Panc1 (cell line): ENCODE measurements at regions of chr9 and their contacts with region 1.

Region 1: GRCh38 chr9:76704593-76705204 is 59.5 kb upstream of the PCA3 start:
- DNase-seq: peak; percentile 47
- ATAC-seq: no peak; the same call in 1 of the 2 replicates
- H3K4me3 ChIP-seq: no peak overlapping the region
- H3K27ac ChIP-seq: no peak overlapping the region
- H3K4me1 ChIP-seq: no peaks in the 10 kb centered on the region
- H3K27me3 ChIP-seq: peaks cover 3% of the 10 kb centered on the region
- CTCF ChIP-seq: peak; percentile 54

Region 2: GRCh38 chr9:76445976-76446375 is 258.7 kb before region 1 on chr9:
- CTCF ChIA-PET with region 1: no interaction called
- POLR2A ChIA-PET with region 1: no interaction called
- in situ Hi-C with region 1: no loop called
- intact Hi-C with region 1: loop called (anchors 2 kb)
- DNase-seq: no peak
- ATAC-seq: no peak
- H3K4me3 ChIP-seq: no peak overlapping the region
- H3K27ac ChIP-seq: no peak overlapping the region
- H3K4me1 ChIP-seq: no peaks in the 10 kb centered on the region
- H3K27me3 ChIP-seq: no peaks in the 10 kb centered on the region
- CTCF ChIP-seq: no peak

Region 3: GRCh38 chr9:76667521-76667957 is 37.2 kb before region 1 on chr9:
- CTCF ChIA-PET with region 1: no interaction called
- POLR2A ChIA-PET with region 1: no interaction called
- in situ Hi-C with region 1: no loop called
- intact Hi-C with region 1: loop called (anchors 2 kb)
- DNase-seq: no peak
- ATAC-seq: no peak
- H3K4me3 ChIP-seq: no peak overlapping the region
- H3K27ac ChIP-seq: no peak overlapping the region
- H3K4me1 ChIP-seq: no peaks in the 10 kb centered on the region
- H3K27me3 ChIP-seq: no peaks in the 10 kb centered on the region; the same call in 1 of the 2 replicates
- CTCF ChIP-seq: no peak

Region 4: DNA sequence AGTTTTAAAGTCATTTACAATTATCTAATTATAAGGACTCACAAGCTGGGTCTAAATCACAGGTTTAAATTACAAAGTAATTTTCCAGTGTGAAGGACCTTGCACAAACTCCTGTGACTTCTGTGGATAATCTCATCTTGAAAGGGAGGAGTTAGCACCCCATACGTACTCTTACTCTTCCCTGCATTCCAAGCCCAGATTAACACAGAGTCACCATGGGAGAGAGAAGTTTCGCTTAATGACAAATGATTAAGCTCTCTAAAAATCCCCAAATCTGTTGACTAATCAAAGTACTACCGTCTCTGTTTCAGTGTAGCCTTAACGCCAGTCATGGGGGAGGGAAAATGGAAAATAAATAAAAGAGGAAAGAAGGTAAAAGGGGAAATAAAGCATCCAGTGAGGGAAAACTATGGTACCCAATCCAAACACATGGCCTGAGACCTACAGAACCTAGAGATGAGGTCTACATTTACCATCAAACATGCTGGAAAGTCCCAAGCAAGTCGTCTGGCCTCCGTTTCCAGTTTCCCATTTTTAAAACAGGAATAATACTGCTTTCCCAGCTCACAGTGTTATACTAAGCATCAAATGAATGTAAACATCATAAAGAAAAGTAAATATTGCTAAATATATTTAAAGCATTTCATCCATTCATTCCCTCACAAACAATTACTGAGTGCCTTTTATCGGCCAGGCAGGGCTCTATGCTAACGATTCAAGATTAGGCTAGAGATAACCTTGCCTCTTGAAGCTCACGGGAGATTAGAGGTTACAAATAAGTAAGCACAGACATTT is 122.8 kb after region 1 on chr9:
- CTCF ChIA-PET with region 1: no interaction called
- POLR2A ChIA-PET with region 1: no interaction called
- in situ Hi-C with region 1: no loop called
- intact Hi-C with region 1: no loop called
- DNase-seq: no peak
- ATAC-seq: no peak
- H3K4me3 ChIP-seq: no peak overlapping the region
- H3K27ac ChIP-seq: no peak overlapping the region
- H3K4me1 ChIP-seq: no peaks in the 10 kb centered on the region
- H3K27me3 ChIP-seq: no peaks in the 10 kb centered on the region
- CTCF ChIP-seq: no peak